ENCODE measurements at regions of chr22 and their contacts with region 1.

Region 1: DNA sequence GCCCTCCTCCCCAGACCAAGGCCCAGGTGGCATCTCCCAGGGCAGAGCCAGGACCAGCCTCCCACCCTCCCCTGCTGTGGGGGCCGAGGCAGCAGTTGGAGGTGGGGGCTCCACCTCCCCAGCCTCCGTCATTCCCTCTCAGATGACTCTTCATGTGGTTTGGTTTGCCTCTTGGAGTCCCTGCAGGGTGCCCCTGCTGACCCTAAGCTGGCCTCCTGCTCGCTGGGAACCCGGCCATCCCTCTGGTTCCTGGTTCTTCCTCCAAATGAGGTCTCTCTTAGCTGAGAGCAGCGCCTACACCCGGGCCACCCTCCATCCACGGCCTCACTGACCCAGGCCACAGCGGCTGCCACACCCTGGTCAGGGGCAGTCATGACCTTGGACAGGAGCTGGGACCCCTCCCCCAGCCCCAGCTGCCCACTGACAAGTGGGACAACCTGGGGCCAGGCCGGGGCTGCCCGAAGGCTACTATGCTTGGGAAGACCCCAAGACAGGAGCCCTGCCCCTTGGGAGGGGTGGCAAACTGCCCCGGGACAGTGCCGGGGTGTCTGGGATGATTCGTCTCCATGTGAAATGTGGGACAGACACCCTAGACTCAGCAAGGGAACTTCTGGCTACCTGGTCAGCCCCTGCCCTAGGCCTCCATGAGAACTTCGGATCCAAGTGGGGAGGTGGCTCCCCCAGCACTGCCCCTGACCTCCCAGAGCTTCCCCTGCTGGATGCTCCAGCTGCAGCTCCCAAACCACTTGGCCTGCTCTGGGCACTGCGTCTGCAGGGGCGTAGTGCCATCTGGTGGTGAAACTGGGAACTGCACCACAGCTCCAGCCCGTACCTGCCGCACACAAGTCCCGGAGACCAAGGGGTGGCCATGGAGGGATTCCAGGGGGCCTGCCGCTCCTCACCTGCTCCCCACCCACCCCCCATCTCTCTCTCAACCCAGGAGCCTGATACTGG is 194.5 kb downstream of the IGLL1 start:
- DNase-seq: peak; percentile 79 to 91 (median 88)
- H3K4me3 ChIP-seq: no peak overlapping the region
- H3K27ac ChIP-seq: peak overlapping the region in 4 of 59 donors; percentile 8 to 61 (median 42)
- H3K27me3 ChIP-seq: no peaks in the 10 kb centered on the region
- CTCF ChIP-seq: peak; percentile 93 to 100 (median 99)

Region 2: GRCh38 chr22:23178512-23179254 is 206.9 kb before region 1 on chr22:
- intact Hi-C with region 1: loop called (anchors 5 kb)
- DNase-seq: peak; percentile 58 to 84 (median 72)
- H3K4me3 ChIP-seq: peak overlapping the region in 5 of 59 donors; percentile 16 to 71 (median 54)
- H3K27ac ChIP-seq: peak overlapping the region in 43 of 59 donors; percentile 7 to 82 (median 68)
- H3K27me3 ChIP-seq: no peaks in the 10 kb centered on the region
- CTCF ChIP-seq: peak; percentile 88 to 99 (median 97)

Region 3: DNA sequence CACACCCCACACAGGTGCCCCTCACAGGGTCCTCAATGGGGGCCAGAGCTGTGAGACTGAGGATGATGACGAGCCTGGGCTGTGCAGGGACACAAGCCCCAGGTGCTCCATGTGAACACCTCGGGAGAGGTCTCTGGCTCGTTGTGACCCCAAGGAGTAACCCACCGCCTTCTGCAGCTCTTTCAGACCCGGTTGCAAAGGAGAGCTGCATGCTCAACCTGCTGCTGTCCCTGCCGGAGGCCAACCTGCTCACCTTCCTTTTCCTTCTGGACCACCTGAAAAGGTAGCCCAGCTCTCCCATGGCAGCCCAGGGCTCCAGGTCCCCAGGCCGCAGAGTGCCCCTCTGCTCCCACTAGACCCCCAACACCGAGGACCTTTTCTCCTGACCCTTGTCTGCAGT is 71.8 kb before region 1 on chr22:
- intact Hi-C with region 1: loop called in 1 of 2 experiments (anchors 2 kb)
- DNase-seq: no peak
- H3K4me3 ChIP-seq: no peak overlapping the region
- H3K27ac ChIP-seq: peak overlapping the region in 1 of 59 donors; percentile 11
- H3K27me3 ChIP-seq: no peaks in the 10 kb centered on the region
- CTCF ChIP-seq: no peak

Region 4: GRCh38 chr22:23322547-23322946 is 63.0 kb before region 1 on chr22:
- intact Hi-C with region 1: loop called in 1 of 2 experiments (anchors 5 kb)
- DNase-seq: no peak
- H3K4me3 ChIP-seq: no peak overlapping the region
- H3K27ac ChIP-seq: no peak overlapping the region
- H3K27me3 ChIP-seq: no peaks in the 10 kb centered on the region
- CTCF ChIP-seq: no peak

Region 5: DNA sequence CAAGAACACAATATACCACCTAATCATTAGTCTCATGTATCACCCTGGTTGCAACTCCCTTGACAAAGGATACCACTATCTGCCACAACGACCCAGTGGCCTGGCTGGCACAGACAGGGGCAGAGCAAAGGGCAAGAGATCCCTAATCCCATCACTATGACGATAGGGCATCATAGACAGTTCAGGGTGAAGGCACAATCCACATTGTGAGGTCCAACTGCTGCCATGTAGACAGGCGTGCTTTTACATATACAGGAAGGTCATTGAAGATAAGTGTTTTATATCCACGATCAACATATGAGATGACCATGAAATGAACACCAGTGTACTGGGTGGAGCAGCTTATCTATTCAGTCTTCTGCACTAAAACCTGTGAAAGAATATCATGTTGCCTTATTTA is 99.9 kb after region 1 on chr22:
- intact Hi-C with region 1: no loop called
- DNase-seq: no peak
- H3K4me3 ChIP-seq: no peak overlapping the region
- H3K27ac ChIP-seq: no peak overlapping the region
- H3K27me3 ChIP-seq: peaks cover 0 to 5% (median 0%) of the 10 kb centered on the region in 45 donors
- CTCF ChIP-seq: no peak

Region 6: GRCh38 chr22:23509571-23510305 is 124.2 kb after region 1 on chr22:
- intact Hi-C with region 1: no loop called
- DNase-seq: peak in 4 of 10 donors; percentile 41 to 52 (median 46)
- H3K4me3 ChIP-seq: peak overlapping the region in 1 of 59 donors; percentile 13
- H3K27ac ChIP-seq: peak overlapping the region in 4 of 59 donors; percentile 10 to 57 (median 34)
- H3K27me3 ChIP-seq: no peaks in the 10 kb centered on the region
- CTCF ChIP-seq: no peak

Region 7: DNA sequence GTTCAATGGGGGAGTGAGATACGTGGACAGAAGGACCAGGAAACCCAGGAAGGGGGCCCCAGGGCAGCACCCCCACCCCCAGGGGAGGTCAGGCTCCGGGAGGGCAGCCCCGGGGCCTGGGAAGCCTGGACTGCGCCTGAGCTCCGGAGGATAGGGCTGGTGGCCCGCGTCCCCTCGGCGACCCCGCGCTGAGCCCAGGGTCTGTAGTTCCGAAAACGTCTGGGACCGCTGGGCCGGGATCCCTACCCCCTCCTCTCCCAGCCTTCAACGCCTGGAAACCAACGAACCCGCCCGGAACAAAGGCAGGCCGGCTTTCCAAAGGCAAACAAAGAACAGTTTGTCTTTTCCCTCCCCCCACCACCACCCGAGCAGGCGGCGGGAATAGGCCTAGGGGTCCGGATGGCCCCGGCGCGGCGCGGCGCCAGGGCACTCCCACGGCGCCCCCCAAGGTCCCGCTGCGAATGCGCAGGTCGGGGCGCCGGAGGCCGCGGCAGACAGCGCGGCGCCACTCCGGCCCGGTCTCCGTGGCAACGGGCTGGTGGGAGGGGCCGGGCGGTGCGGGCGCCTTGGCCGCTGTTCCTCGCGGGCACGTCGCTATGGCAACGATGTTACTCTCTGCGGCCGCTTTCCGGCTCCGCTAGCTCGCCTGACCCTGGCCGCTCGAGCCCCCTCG is 136.0 kb after region 1 on chr22:
- intact Hi-C with region 1: loop called in 1 of 2 experiments (anchors 10 kb)
- DNase-seq: peak; percentile 88 to 97 (median 92)
- H3K4me3 ChIP-seq: peak overlapping the region; percentile 36 to 72 (median 61)
- H3K27ac ChIP-seq: peak overlapping the region; percentile 39 to 98 (median 93)
- H3K27me3 ChIP-seq: no peaks in the 10 kb centered on the region
- CTCF ChIP-seq: peak in 34 of 56 donors; percentile 12 to 65 (median 29)

Measured in dorsolateral prefrontal cortex (tissue), 120 donors.